ENCODE measurements at regions of chr17 and their contacts with region 1.

Region 1: GRCh38 chr17:75749545-75750389 is 15.2 kb downstream of the GALK1 start:
- DNase-seq: peak; percentile 93
- ATAC-seq: peak; percentile 73
- H3K4me3 Mint-ChIP-seq: no peak overlapping the region
- H3K27ac Mint-ChIP-seq: no peak overlapping the region
- H3K4me1 Mint-ChIP-seq: peaks cover 18% of the 10 kb centered on the region
- H3K27me3 Mint-ChIP-seq: peaks cover 2% of the 10 kb centered on the region

Region 2: DNA sequence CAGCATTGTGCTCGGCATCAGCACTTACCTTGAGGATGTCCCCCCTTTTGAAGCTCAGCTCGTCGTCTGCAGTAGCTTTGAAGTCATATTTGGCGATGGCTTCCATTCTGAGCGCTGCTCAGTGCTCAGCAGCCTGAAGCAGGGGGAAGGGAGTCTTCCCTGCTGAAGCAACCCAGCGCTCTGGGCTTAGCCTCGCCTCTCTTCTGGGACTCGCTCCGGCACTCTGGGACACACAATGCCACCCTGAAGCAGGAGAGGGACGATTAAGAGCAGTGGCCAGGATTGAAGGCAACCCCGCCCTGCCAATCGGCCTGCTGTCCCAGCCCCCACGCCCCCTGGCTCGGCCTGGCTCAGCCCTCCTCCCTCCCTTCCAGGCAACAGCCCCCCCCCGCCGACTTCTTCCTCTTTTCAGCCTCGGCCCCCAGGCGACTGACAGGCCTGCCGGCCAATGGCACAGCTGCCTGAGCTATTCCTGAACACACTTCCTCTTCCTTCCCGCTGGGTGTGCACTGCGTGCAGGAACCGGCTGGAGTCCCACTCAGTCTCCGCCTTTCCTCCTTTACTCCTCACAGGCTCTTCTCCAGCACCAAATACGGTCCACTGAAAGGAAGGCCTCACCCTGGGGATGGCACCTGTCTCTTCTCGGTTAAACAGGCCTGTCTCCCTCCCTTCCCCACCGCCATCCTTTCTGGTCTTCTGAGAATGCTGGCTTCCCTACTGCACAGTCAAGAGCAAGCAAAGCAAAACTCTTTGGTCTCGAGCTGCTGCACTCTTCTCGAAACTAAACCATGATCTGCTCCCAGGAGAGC is 356.0 kb before region 1 on chr17:
- CTCF ChIA-PET with region 1: no interaction called
- POLR2A ChIA-PET with region 1: no interaction called
- DNase-seq: peak; percentile 89
- ATAC-seq: peak; percentile 95
- H3K4me3 Mint-ChIP-seq: peak overlapping the region; percentile 89
- H3K27ac Mint-ChIP-seq: peak overlapping the region; percentile 73
- H3K4me1 Mint-ChIP-seq: peaks cover 68% of the 10 kb centered on the region
- H3K27me3 Mint-ChIP-seq: no peaks in the 10 kb centered on the region

Region 3: GRCh38 chr17:75619506-75620431 is 130.0 kb before region 1 on chr17:
- CTCF ChIA-PET with region 1: interaction called, 23 read pairs
- POLR2A ChIA-PET with region 1: no interaction called
- DNase-seq: peak; percentile 47
- ATAC-seq: peak; percentile 41
- H3K4me3 Mint-ChIP-seq: no peak overlapping the region
- H3K27ac Mint-ChIP-seq: no peak overlapping the region
- H3K4me1 Mint-ChIP-seq: no peaks in the 10 kb centered on the region
- H3K27me3 Mint-ChIP-seq: no peaks in the 10 kb centered on the region

Region 4: GRCh38 chr17:75667021-75667790 is 82.6 kb before region 1 on chr17 and contains the starts of genes RECQL5 and SAP30BP:
- CTCF ChIA-PET with region 1: interaction called, 152 read pairs
- POLR2A ChIA-PET with region 1: interaction called, 7 read pairs
- DNase-seq: peak; percentile 99
- ATAC-seq: peak; percentile 100
- H3K4me3 Mint-ChIP-seq: peak within 1 kb of the TSS; percentile 63
- H3K27ac Mint-ChIP-seq: peak within 1 kb of the TSS; percentile 79
- H3K4me1 Mint-ChIP-seq: peaks cover 31% of the 10 kb centered on the region
- H3K27me3 Mint-ChIP-seq: no peaks in the 10 kb centered on the region
- total RNA-seq, gene RECQL5: 37.6 to 43.9 TPM
- total RNA-seq, gene SAP30BP: 88.7 to 93.7 TPM

Region 5: DNA sequence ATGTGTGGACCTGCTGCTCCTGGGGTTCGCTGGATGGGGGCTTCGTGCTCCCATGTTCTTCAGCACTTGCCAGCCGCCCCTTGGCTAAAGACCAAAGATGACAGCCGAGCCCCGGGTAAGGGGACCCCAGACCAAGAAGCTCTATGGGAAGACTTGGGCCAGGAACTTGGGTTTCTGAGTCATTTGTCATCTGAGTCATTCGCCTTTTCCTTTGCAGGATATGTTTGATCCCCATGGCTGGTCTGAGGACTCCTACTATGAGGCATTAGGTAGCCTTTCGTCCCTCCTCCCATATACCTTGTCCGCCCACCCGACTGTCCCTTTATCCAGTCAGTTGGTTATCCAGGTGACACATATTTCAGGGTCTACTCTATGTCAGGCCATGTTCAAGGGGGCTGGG is 46.2 kb before region 1 on chr17:
- CTCF ChIA-PET with region 1: interaction called, 11 read pairs
- POLR2A ChIA-PET with region 1: interaction called, 3 read pairs
- DNase-seq: no peak
- ATAC-seq: no peak
- H3K4me3 Mint-ChIP-seq: no peak overlapping the region
- H3K27ac Mint-ChIP-seq: no peak overlapping the region
- H3K4me1 Mint-ChIP-seq: no peaks in the 10 kb centered on the region
- H3K27me3 Mint-ChIP-seq: no peaks in the 10 kb centered on the region

Region 6: GRCh38 chr17:75764711-75765421 is 15.1 kb after region 1 on chr17 and contains the start of gene GALK1:
- CTCF ChIA-PET with region 1: interaction called, 82 read pairs
- POLR2A ChIA-PET with region 1: interaction called, 17 read pairs
- DNase-seq: peak; percentile 80
- ATAC-seq: peak; percentile 94
- H3K4me3 Mint-ChIP-seq: peak within 1 kb of the TSS; percentile 79
- H3K27ac Mint-ChIP-seq: peak within 1 kb of the TSS; percentile 63
- H3K4me1 Mint-ChIP-seq: peaks cover 15% of the 10 kb centered on the region
- H3K27me3 Mint-ChIP-seq: peaks cover 6% of the 10 kb centered on the region
- total RNA-seq, gene GALK1: 52.2 to 56.9 TPM

Region 7: GRCh38 chr17:75827252-75828115 is 77.7 kb after region 1 on chr17:
- CTCF ChIA-PET with region 1: interaction called, 44 read pairs
- POLR2A ChIA-PET with region 1: interaction called, 4 read pairs
- DNase-seq: peak; percentile 77
- ATAC-seq: peak; percentile 71
- H3K4me3 Mint-ChIP-seq: peak overlapping the region; percentile 63
- H3K27ac Mint-ChIP-seq: peak overlapping the region; percentile 99
- H3K4me1 Mint-ChIP-seq: peaks cover 41% of the 10 kb centered on the region
- H3K27me3 Mint-ChIP-seq: no peaks in the 10 kb centered on the region

Region 8: DNA sequence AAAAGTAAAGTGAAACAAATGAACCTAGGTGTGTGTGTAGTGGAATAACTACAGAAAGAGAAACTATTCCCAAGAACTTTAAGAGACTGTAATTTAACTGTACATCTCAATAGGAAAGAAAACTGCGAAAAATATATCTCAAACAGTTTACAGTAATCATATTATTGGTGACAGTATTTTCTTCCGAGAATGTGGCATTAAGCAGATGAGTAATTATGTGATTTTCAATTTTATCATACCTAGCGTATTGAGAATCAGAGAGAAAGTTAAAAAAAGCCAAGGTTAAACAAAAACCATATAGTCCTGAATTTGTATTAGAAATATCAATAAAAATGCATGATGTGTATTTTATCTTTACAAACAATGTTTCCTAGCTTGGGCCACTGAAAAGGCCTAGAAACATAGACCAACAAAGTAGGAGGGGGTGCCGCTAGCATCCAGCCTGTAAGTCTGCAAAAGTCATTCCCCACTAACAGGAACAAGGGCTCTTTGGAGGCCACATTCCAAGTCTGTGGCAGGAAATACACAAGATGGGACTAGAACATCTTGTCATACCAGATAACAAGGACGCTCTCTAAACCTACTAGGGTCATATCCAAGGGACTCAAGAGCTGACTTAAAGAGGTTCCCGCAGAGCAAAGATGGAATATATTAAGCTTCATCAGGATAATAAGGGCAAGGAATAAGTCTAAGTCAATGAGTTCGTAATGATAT is 470.1 kb after region 1 on chr17:
- CTCF ChIA-PET with region 1: no interaction called
- POLR2A ChIA-PET with region 1: no interaction called
- DNase-seq: no peak
- ATAC-seq: no peak
- H3K4me3 Mint-ChIP-seq: no peak overlapping the region
- H3K27ac Mint-ChIP-seq: no peak overlapping the region
- H3K4me1 Mint-ChIP-seq: peaks cover 37% of the 10 kb centered on the region
- H3K27me3 Mint-ChIP-seq: no peaks in the 10 kb centered on the region